Activated CD4-positive, alpha-beta memory T cell treated with anti-CD3 and anti-CD28 coated beads for 36 hours (primary cell): ENCODE measurements at regions of chr9 and their contacts with region 1.

Region 1: DNA sequence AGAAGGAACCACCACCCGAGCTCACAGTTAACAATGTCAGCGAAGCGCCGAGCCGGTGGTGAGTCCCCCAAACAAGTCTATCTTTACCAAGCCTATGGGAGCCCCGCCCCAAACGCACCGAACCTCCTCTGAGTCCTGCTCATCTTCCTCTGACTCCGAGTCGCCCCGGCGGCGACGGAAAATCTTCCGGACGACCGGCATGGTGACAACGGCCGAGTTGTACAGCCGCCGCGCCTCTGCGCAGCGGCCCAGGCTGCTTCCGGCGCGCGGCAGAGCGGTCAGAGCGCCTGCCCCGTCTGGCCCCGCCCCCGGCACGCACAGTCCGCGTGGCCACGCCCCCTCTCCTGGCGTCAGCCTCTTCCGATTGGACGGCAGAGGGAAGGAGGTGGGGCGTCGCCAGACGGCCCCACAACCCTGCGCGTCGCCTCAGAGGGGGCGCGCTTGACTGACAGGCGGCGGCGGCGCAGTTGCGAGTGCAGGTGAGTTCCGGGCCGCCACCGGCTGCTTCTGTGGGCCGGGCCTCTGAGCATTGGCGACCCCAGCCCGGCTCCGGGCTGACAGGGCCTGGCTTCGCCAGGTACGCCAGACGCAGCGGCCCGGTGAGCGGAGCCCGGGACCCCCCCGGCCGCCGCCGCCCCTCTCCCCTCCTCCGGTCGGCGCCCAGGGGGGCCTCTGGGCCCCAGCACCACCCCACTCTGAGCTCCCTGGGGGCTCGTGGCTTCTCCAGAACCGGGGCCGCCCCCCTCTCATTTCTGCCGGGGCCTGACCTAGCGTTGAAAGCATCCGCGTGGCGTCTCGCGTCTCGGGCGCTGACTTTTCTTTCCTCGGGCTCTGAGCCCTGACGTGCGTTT is at the starts of genes C9orf78 and USP20:
- DNase-seq: peak; percentile 97
- H3K4me3 Mint-ChIP-seq: peak within 1 kb of the TSS; percentile 98
- H3K27ac Mint-ChIP-seq: peak within 1 kb of the TSS; percentile 92
- H3K4me1 Mint-ChIP-seq: peaks cover 54% of the 10 kb centered on the region
- H3K27me3 Mint-ChIP-seq: no peaks in the 10 kb centered on the region
- total RNA-seq, gene C9orf78: 43.6 to 47.0 TPM
- total RNA-seq, gene USP20: 51.6 to 55.3 TPM

Region 2: GRCh38 chr9:129823935-129824601 is 11.2 kb before region 1 on chr9 and contains the start of gene TOR1A:
- CTCF ChIA-PET with region 1: no interaction called
- POLR2A ChIA-PET with region 1: interaction called, 3 read pairs
- intact Hi-C with region 1: loop called (anchors 1 kb)
- DNase-seq: peak; percentile 96
- H3K4me3 Mint-ChIP-seq: peak within 1 kb of the TSS; percentile 81
- H3K27ac Mint-ChIP-seq: peak within 1 kb of the TSS; percentile 80
- H3K4me1 Mint-ChIP-seq: peaks cover 13% of the 10 kb centered on the region
- H3K27me3 Mint-ChIP-seq: no peaks in the 10 kb centered on the region
- total RNA-seq, gene TOR1A: 38.5 to 41.6 TPM

Region 3: GRCh38 chr9:129863059-129863690 is 27.9 kb after region 1 on chr9:
- CTCF ChIA-PET with region 1: no interaction called
- POLR2A ChIA-PET with region 1: interaction called, 35 read pairs
- intact Hi-C with region 1: loop called (anchors 2 kb)
- DNase-seq: peak; percentile 89
- H3K4me3 Mint-ChIP-seq: peak overlapping the region; percentile 52
- H3K27ac Mint-ChIP-seq: peak overlapping the region; percentile 84
- H3K4me1 Mint-ChIP-seq: peaks cover 70% of the 10 kb centered on the region
- H3K27me3 Mint-ChIP-seq: no peaks in the 10 kb centered on the region

Region 4: DNA sequence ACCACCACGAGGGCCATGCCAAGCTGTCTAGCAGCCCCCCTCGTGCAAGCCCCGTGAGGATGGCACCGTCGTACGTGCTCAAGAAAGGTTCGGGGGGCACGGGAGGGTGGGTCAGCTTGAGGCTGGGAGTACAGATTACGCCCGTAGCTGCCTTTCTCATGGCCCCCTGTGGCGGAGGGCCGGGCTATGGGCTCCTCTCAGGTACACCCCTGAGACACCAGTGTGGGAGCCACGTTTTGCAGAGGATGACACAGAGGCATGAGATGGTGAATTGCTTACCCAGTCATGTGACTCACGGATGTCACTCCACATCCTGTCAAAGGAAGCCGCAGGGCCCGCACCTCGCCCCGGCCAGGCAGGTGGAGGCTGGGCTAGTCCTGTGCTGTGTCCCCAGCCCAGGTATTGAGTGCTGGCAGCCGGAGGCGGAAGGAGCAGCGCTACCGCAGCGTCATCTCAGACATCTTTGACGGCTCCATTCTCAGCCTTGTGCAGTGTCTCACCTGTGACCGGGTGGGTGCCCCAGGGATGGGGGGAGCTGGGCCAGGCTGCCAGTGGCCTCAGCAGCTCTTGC is 33.8 kb after region 1 on chr9:
- CTCF ChIA-PET with region 1: no interaction called
- POLR2A ChIA-PET with region 1: interaction called, 35 read pairs
- intact Hi-C with region 1: loop called (anchors 1 kb)
- DNase-seq: peak; percentile 95
- H3K4me3 Mint-ChIP-seq: peak overlapping the region; percentile 67
- H3K27ac Mint-ChIP-seq: peak overlapping the region; percentile 90
- H3K4me1 Mint-ChIP-seq: peaks cover 71% of the 10 kb centered on the region
- H3K27me3 Mint-ChIP-seq: no peaks in the 10 kb centered on the region

Region 5: GRCh38 chr9:130034570-130034969 is 199.3 kb after region 1 on chr9:
- CTCF ChIA-PET with region 1: no interaction called
- POLR2A ChIA-PET with region 1: interaction called, 8 read pairs
- intact Hi-C with region 1: loop called (anchors 5 kb)
- DNase-seq: peak; percentile 54
- H3K4me3 Mint-ChIP-seq: peak overlapping the region; percentile 49
- H3K27ac Mint-ChIP-seq: peak overlapping the region; percentile 96
- H3K4me1 Mint-ChIP-seq: peaks cover 81% of the 10 kb centered on the region
- H3K27me3 Mint-ChIP-seq: no peaks in the 10 kb centered on the region

Region 6: DNA sequence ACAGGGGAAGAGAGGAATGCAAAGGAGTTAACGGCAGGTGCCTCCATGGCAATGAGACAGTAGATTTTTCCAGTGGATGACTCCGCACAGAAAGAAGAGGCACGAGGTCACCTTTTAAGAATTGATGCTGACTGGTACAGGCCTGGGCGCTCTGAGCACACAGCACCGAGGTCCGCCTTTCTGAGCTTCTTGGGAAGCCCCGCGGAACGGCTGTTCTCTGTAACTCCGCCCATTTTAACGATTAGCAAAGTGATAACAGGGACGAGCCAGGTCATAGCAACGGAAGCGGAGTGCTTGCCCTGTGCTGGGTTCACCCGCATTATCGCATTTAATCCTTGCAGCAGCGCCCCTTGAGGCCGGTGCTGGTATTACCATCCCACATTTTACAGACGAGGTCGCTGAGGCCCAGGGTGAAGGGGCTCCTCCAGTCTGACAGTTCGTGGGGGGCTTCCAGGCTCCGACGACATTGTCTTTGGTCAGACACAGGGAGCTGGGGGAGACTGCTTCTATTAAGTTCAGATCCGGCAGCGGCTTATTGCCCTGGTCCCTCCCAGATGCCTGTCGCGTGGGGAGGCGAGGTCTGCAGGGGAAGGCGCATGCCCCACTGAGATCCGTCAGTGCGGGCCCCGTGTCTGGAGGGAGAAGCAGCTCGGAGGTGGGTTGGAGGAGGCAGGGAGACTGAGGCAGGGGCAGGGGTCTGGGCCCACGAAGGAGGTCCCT is 407.9 kb after region 1 on chr9:
- CTCF ChIA-PET with region 1: no interaction called
- POLR2A ChIA-PET with region 1: no interaction called
- intact Hi-C with region 1: loop called (anchors 5 kb)
- DNase-seq: peak; percentile 88
- H3K4me3 Mint-ChIP-seq: peak overlapping the region; percentile 53
- H3K27ac Mint-ChIP-seq: peak overlapping the region; percentile 7
- H3K4me1 Mint-ChIP-seq: peaks cover 32% of the 10 kb centered on the region
- H3K27me3 Mint-ChIP-seq: no peaks in the 10 kb centered on the region